ENCODE measurements at regions of chr6 and their contacts with region 1.

Region 1: DNA sequence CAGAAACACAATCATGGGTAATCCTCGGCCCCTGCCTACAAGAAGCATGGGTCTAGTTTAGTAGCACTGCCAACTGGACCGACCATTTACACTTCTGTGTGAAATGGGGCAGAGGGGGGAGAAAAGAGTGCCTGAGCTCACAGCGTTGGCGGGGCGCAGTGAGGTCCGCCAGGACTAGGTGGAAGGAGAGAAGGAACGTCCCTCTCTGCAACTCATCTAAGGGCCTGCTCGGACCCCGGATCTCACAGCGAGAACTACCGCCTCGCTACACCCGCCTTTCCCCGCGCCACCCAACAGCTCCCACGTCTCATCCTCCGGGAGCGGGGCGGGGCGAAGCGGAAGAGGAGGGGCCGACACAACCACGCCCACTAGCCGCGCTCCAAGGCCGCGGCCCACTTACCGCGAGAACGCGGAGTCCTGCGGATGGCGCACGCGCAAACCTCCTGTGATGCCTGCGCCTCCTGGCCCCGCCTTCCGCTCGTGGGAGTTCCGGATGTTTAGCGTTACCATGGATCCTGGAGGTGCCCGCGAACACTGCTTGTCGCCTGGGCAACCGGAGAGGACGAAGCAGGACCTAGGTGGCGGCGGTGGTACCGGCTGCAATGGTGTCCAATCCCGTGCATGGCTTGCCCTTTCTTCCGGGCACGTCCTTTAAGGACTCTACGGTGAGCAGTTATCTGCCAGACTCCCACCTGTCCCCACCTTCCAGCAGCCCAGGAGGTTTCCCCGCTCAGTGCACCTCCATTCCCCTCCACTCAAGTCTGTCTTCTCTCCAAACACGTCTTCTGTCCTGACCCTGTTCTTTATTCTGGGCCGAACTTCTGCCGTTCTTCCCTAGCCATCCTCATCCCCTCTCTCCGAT is at the start of gene EFHC1:
- DNase-seq: peak; percentile 97
- total RNA-seq, gene EFHC1: 14.1 and 23.7 TPM in 2 replicates

Region 2: DNA sequence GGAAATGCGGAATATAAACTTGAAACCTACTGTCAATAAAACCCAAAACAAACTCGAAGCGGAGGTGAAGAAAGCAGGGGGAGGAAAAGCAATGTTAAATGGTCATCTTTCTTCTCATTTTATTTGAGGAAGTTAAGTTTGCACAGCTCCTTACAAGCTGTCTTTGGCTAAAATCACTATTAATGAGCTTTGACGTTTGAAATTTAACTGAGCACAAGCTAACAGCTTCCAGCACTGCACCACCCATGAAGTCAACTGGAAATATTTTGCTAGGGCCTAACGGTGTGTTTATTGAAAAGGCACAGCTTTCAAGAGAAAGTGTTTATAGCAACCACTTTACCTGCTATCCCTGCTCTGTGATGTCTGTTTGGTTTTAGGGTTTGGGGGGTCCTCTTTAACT is 436.5 kb before region 1 on chr6:
- in situ Hi-C with region 1: no loop called
- DNase-seq: no peak

Region 3: GRCh38 chr6:52337633-52338290 is 82.3 kb before region 1 on chr6:
- in situ Hi-C with region 1: no loop called
- DNase-seq: no peak

Region 4: DNA sequence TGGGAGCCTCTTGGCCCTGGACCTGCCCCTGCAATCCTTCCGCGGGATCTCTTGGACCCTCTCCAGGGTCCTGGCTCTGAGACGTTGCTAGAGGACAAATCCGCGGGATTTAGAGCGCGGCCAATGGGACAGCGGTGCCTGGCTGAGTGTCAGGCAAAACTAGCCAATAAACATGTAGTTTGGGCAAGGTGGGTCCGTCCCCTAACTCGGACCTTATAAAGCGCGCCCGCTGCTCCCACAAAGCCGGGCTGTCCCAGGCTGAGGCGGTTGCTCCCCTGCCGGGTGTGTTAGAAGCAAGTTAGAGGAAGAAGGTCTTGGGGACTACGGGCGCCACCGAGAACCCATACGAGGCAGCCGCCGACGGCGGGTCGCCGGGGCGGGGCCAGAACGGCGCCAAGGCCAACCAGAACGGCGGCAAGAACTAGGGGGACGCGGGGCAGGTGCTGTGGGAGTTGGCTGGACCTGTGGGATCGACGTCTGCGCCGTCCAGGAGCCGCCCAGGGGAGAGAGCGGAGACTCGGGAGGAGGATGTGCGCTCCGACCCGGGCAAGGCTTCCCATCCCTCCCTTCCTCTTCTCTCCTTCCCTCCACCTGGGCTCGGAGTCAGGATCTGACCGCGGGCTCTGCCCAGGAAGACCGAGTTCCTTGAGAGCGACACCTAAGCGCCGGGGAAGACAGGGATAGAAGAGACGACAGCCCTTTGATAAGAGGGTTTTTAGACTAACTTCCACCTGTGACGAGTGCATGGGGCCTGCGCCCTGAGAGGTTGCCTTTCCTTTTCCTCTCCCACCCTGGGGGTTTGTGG is 244.3 kb after region 1 on chr6:
- in situ Hi-C with region 1: loop called (anchors 25 kb)
- DNase-seq: peak; percentile 95